Activated CD4-positive, alpha-beta T cell treated with anti-CD3 and anti-CD28 coated beads for 36 hours (primary cell): ENCODE measurements at regions of chr16 and their contacts with region 1.

Region 1: GRCh38 chr16:23959072-23959751 is 123.4 kb downstream of the PRKCB start:
- DNase-seq: no peak
- ATAC-seq: peak; percentile 49
- H3K4me3 Mint-ChIP-seq: peak overlapping the region; percentile 54
- H3K27ac Mint-ChIP-seq: peak overlapping the region; percentile 79
- H3K4me1 Mint-ChIP-seq: peaks cover 77% of the 10 kb centered on the region
- H3K27me3 Mint-ChIP-seq: no peaks in the 10 kb centered on the region

Region 2: DNA sequence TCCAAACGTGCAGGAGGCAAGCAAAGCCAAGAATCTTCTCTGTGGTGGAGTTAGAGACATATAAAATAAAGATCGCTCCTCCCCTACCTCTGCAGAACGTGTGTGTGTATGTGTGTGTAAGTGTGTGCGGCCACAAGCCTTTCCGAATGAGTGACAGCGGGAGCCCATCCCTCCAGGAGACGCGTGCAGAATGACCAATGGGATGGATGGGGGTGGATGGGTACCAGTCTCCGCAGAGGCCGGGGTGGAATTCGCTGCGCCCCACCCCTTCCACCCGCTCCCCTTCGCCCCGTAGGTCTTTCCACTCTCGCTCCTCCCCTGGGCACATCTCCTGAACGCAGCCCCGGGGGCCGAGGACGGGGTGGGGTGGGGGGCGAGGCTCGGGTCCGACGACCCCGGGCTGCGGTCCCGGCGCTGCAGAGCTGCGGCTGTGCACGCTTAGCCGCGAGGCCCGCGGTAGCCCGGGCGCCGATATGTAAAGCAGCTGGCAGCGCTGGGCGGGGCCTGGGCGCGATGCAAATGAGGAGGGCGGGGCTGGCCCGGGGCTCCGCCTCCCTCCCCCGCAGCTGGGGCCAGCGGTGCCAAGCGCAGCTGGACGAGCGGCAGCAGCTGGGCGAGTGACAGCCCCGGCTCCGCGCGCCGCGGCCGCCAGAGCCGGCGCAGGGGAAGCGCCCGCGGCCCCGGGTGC is 123.7 kb before region 1 on chr16 and contains the start of gene PRKCB:
- CTCF ChIA-PET with region 1: no interaction called
- POLR2A ChIA-PET with region 1: no interaction called
- intact Hi-C with region 1: loop called in 1 of 2 experiments (anchors 2 kb)
- DNase-seq: peak; percentile 95
- ATAC-seq: peak; percentile 79
- H3K4me3 Mint-ChIP-seq: peak within 1 kb of the TSS; percentile 80
- H3K27ac Mint-ChIP-seq: peak within 1 kb of the TSS; percentile 59
- H3K4me1 Mint-ChIP-seq: peaks cover 54% of the 10 kb centered on the region
- H3K27me3 Mint-ChIP-seq: peaks cover 2% of the 10 kb centered on the region
- total RNA-seq, gene PRKCB: 57.5 to 83.8 TPM

Region 3: GRCh38 chr16:23842137-23842600 is 117.0 kb before region 1 on chr16:
- CTCF ChIA-PET with region 1: no interaction called
- POLR2A ChIA-PET with region 1: no interaction called
- intact Hi-C with region 1: loop called (anchors 1 kb)
- DNase-seq: peak; percentile 67
- ATAC-seq: peak; percentile 91
- H3K4me3 Mint-ChIP-seq: no peak overlapping the region
- H3K27ac Mint-ChIP-seq: peak overlapping the region; percentile 85
- H3K4me1 Mint-ChIP-seq: peaks cover 83% of the 10 kb centered on the region
- H3K27me3 Mint-ChIP-seq: no peaks in the 10 kb centered on the region

Region 4: GRCh38 chr16:23877107-23878090 is 81.8 kb before region 1 on chr16:
- CTCF ChIA-PET with region 1: no interaction called
- POLR2A ChIA-PET with region 1: no interaction called
- intact Hi-C with region 1: loop called (anchors 5 kb)
- DNase-seq: peak; percentile 52
- ATAC-seq: peak; percentile 73
- H3K4me3 Mint-ChIP-seq: no peak overlapping the region
- H3K27ac Mint-ChIP-seq: peak overlapping the region; percentile 55
- H3K4me1 Mint-ChIP-seq: peaks cover 75% of the 10 kb centered on the region
- H3K27me3 Mint-ChIP-seq: no peaks in the 10 kb centered on the region

Region 5: GRCh38 chr16:23999663-24000062 is 40.5 kb after region 1 on chr16:
- CTCF ChIA-PET with region 1: no interaction called
- POLR2A ChIA-PET with region 1: interaction called, 4 read pairs
- intact Hi-C with region 1: loop called (anchors 1 to 5 kb)
- DNase-seq: peak; percentile 85
- ATAC-seq: peak; percentile 98
- H3K4me3 Mint-ChIP-seq: no peak overlapping the region
- H3K27ac Mint-ChIP-seq: peak overlapping the region; percentile 44
- H3K4me1 Mint-ChIP-seq: peaks cover 20% of the 10 kb centered on the region
- H3K27me3 Mint-ChIP-seq: no peaks in the 10 kb centered on the region

Region 6: GRCh38 chr16:24151482-24151939 is 192.3 kb after region 1 on chr16:
- CTCF ChIA-PET with region 1: no interaction called
- POLR2A ChIA-PET with region 1: no interaction called
- intact Hi-C with region 1: loop called in 1 of 2 experiments (anchors 1 kb)
- DNase-seq: peak; percentile 42
- ATAC-seq: peak; percentile 82
- H3K4me3 Mint-ChIP-seq: no peak overlapping the region
- H3K27ac Mint-ChIP-seq: peak overlapping the region; percentile 87
- H3K4me1 Mint-ChIP-seq: peaks cover 48% of the 10 kb centered on the region
- H3K27me3 Mint-ChIP-seq: no peaks in the 10 kb centered on the region